ENCODE measurements at regions of chr2 and their contacts with region 1.

Region 1: DNA sequence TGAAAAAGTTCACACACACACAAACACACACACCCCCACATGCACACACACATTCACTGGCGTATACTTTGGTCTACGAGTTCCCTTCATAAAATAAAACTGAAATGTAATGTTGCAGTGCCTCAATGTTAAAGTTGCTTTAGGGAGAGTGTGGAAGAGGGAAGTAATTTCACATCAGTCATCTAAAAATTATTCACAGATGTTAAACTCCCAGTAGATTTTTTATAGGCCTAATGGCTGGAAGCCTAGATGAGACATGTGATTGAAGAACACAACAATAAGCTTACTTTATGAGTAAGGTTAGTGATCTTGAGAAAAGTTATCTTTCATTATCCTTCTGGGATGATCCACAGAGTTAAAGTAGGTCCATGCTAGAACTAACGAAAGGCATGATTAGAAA is 506.7 kb upstream of the CNTNAP5 start:
- DNase-seq: no peak
- H3K4me3 Mint-ChIP-seq: no peak overlapping the region
- H3K27ac Mint-ChIP-seq: no peak overlapping the region
- H3K4me1 Mint-ChIP-seq: no peaks in the 10 kb centered on the region
- H3K27me3 Mint-ChIP-seq: no peaks in the 10 kb centered on the region
- CTCF ChIP-seq: no peak

Region 2: GRCh38 chr2:122886479-122887145 is 631.8 kb before region 1 on chr2:
- CTCF ChIA-PET with region 1: no interaction called
- intact Hi-C with region 1: no loop called
- DNase-seq: no peak
- H3K4me3 Mint-ChIP-seq: no peak overlapping the region
- H3K27ac Mint-ChIP-seq: no peak overlapping the region
- H3K4me1 Mint-ChIP-seq: no peaks in the 10 kb centered on the region
- H3K27me3 Mint-ChIP-seq: no peaks in the 10 kb centered on the region
- CTCF ChIP-seq: no peak

Region 3: DNA sequence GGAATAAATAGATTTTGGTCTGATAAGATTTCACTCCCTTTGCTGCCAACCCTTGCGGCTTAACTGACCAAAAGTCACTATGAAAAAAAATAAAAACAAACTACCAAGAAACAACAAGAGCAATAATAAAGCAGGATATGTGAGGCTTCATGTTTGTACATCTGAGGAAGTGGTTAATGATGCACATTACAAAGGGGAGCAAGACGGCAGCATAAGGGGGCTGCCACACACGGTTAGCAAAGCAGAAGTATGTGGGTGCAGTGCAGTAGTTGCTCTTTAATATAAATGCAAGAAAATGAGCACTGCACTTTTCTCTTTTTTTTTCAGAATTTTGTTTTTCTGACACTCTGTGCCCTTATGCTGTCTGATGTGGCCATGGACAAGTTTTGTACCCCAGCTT is 129.6 kb after region 1 on chr2:
- CTCF ChIA-PET with region 1: no interaction called
- intact Hi-C with region 1: no loop called
- DNase-seq: no peak
- H3K4me3 Mint-ChIP-seq: no peak overlapping the region
- H3K27ac Mint-ChIP-seq: no peak overlapping the region
- H3K4me1 Mint-ChIP-seq: no peaks in the 10 kb centered on the region
- H3K27me3 Mint-ChIP-seq: no peaks in the 10 kb centered on the region
- CTCF ChIP-seq: no peak

Region 4: GRCh38 chr2:123993728-123994323 is 475.5 kb after region 1 on chr2:
- CTCF ChIA-PET with region 1: no interaction called
- intact Hi-C with region 1: loop called (anchors 5 kb)
- DNase-seq: peak; percentile 26
- H3K4me3 Mint-ChIP-seq: no peak overlapping the region
- H3K27ac Mint-ChIP-seq: no peak overlapping the region
- H3K4me1 Mint-ChIP-seq: no peaks in the 10 kb centered on the region
- H3K27me3 Mint-ChIP-seq: no peaks in the 10 kb centered on the region
- CTCF ChIP-seq: peak; percentile 39